ENCODE measurements at regions of chr4 and their contacts with region 1.

Region 1: DNA sequence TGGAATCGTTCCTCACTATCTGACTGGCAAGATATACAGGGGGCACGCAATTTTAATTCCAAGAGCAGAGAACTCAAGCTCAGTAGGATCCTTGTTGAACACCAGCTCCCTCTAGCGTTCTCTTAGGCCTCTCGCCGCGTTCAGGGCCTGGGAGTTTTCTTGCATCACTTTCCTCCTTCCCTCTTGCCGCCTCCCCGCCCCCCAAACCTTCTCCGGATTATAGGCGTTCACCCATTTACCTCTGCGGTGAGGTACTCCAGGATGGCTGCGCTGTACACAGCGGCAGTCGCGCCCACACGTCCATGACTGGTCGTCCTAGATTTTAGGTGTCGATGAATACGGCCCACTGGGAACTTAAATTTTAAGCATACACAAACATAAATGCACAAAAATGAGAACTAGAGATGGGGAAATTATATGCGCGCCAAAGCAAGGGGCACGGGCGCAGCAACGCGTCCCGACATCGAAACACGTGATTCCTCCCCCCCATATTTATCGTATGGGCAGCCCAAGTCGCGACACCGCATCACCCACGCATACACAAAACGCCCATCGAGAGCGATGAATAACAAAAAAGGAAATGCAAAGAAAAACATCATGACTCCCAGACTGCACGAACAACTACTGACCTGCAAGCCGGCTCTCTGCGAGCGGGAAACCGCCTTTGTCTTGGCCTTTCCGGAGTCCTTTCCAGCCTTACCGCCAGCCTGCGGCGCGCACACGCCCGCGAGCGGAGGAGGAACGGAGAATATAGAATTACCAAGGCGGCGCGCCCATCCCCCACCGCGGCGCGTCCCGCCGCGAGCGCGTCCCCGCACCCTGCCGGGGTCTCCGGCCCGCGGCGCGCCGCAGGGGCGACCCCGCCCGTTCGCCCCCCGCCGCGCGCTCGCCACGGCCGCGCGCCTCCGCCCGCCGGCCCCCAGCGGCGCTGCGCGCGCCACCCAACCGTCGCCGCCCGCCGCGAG is 759 bp downstream of the H2AZ1 start:
- DNase-seq: peak; percentile 96
- H3K4me3 Mint-ChIP-seq: no peak overlapping the region
- H3K27ac Mint-ChIP-seq: no peak overlapping the region
- H3K4me1 Mint-ChIP-seq: peaks cover 31% of the 10 kb centered on the region
- H3K27me3 Mint-ChIP-seq: no peaks in the 10 kb centered on the region

Region 2: GRCh38 chr4:98995183-98996055 is 953.9 kb before region 1 on chr4 and contains the start of gene METAP1:
- CTCF ChIA-PET with region 1: no interaction called
- intact Hi-C with region 1: loop called (anchors 2 kb)
- DNase-seq: peak; percentile 95
- H3K4me3 Mint-ChIP-seq: peak within 1 kb of the TSS; percentile 84
- H3K27ac Mint-ChIP-seq: peak within 1 kb of the TSS; percentile 92
- H3K4me1 Mint-ChIP-seq: peaks cover 38% of the 10 kb centered on the region
- H3K27me3 Mint-ChIP-seq: no peaks in the 10 kb centered on the region
- total RNA-seq, gene METAP1: 65.6 to 70.1 TPM

Region 3: DNA sequence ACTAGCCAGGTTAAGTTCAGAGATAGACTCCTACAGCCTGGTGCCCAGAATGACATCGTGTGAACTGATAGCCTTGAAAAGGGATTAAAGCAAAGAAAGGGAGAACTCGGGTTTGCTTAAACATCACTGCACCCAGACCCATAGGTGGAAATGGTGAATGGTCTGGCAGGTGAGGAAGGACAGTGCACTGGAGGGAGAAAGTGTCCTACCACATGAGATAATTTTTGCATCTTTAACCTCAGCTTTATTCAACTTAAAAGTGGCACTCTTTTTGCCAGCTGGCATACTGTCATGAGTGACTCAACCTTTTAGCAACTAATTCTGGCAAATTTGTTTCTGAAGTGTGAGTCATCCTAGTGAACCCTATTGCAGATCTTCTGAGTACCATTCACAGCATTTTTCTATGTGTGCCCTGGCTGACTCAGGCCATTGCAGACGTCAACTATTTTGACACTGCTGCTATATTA is 185.6 kb before region 1 on chr4:
- CTCF ChIA-PET with region 1: no interaction called
- intact Hi-C with region 1: loop called (anchors 5 kb)
- DNase-seq: peak; percentile 38
- H3K4me3 Mint-ChIP-seq: no peak overlapping the region
- H3K27ac Mint-ChIP-seq: no peak overlapping the region
- H3K4me1 Mint-ChIP-seq: peaks cover 27% of the 10 kb centered on the region
- H3K27me3 Mint-ChIP-seq: peaks cover 13% of the 10 kb centered on the region

Region 4: GRCh38 chr4:99885063-99885664 is 64.2 kb before region 1 on chr4:
- CTCF ChIA-PET with region 1: interaction called, 3 read pairs
- intact Hi-C with region 1: loop called (anchors 2 kb)
- DNase-seq: peak; percentile 57
- H3K4me3 Mint-ChIP-seq: no peak overlapping the region
- H3K27ac Mint-ChIP-seq: no peak overlapping the region
- H3K4me1 Mint-ChIP-seq: peaks cover 6% of the 10 kb centered on the region
- H3K27me3 Mint-ChIP-seq: no peaks in the 10 kb centered on the region

Region 5: GRCh38 chr4:100017637-100018310 is 68.5 kb after region 1 on chr4:
- CTCF ChIA-PET with region 1: interaction called, 4 read pairs
- intact Hi-C with region 1: loop called (anchors 1 kb)
- DNase-seq: peak; percentile 22
- H3K4me3 Mint-ChIP-seq: no peak overlapping the region
- H3K27ac Mint-ChIP-seq: peak overlapping the region; percentile 11
- H3K4me1 Mint-ChIP-seq: peaks cover 10% of the 10 kb centered on the region
- H3K27me3 Mint-ChIP-seq: peaks cover 3% of the 10 kb centered on the region

Region 6: DNA sequence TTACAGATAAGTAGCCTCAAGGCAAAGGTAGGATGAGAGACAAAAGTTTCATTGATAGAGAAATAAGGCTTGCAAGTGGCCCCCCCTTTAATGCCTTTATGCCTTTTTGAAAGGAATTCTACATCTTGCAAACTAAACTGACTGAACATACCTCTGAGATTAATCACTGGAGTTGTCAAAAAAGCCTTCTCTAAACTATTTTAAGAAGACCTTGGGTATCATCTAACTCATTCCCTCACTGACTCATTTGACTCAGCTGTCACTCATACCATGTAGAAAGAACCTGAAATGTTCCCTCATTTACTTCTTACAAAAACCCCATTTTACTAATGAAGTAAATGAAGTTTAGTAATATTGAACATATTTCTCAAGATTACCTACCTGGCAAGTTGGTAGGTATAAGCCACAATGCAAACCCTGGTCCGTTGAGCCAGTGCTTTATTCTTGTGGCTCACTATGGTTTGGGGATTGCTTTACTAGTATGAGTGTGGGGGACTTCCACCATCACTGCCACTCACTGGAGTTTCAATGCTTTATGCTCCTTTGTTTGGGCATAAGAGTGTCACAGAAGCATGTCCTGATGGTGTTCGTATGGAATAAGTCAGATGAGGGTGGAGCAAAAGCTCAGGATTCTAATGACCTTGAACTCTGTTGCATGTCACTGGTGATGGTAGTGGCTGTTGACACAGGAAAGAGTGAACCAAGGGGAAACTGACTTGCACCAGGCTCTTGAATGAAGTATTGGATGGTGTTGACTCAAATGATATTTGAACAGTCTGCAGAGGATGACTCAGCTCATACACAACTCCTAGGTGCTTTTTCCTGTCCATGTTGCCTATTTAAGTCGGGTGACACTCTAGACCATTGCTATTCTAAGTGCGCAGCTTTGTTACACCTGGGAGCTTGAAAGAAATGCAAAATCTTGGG is 874.0 kb after region 1 on chr4:
- CTCF ChIA-PET with region 1: no interaction called
- intact Hi-C with region 1: loop called (anchors 1 kb)
- DNase-seq: peak; percentile 53
- H3K4me3 Mint-ChIP-seq: no peak overlapping the region
- H3K27ac Mint-ChIP-seq: peak overlapping the region; percentile 82
- H3K4me1 Mint-ChIP-seq: peaks cover 9% of the 10 kb centered on the region
- H3K27me3 Mint-ChIP-seq: peaks cover under 1% of the 10 kb centered on the region